ENCODE measurements at regions of chr6 and their contacts with region 1.

Region 1: DNA sequence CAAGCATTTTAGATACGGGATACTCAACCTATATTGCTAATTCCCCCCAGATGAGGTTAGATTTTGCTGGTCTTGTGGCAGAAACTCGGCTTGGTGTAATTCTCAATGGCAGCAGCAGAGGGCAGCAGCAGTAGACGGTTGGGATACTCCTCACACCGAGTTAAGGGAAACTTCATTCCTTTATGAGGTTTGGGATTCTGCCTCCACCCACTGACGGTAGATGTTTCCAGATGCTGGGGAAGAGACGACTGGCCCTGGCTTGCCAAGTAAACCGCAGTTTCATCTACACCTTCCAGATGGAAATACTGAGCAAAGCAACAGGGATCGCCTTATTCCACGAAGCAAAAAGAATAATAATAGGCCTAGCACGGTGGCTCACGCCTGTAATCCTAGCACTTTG is 8.2 kb upstream of the TBC1D7 start:
- DNase-seq: peak; percentile 79
- H3K4me3 ChIP-seq: no peak overlapping the region
- H3K27ac ChIP-seq: no peak overlapping the region
- H3K4me1 ChIP-seq: peaks cover 0 to 5% (median 1%) of the 10 kb centered on the region in 4 donors
- H3K27me3 ChIP-seq: no peaks in the 10 kb centered on the region
- CTCF ChIP-seq: peak; percentile 91 to 97 (median 91)
- EP300 ChIP-seq: no peak
- POLR2A ChIP-seq: no peak

Region 2: DNA sequence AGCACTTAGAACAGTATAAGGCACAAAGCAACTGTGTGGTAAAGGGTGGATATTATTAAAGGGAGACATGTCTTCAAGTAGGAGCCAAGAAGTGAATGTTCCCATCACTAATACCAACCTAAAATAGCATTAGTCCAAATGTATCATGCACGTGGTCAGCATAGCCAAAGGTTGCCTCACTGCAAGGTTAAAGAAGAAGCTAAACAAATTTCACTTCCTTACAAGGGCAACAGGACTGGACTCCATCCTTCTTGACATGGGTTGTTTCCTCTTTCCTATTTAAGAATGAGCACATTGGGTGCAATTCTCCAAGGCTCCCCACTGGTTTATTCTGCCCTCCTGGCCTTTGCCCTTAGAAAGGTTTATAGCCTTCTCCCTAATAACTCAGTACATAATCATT is 433.3 kb before region 1 on chr6:
- in situ Hi-C with region 1: loop called in 3 of 4 experiments (anchors 10 to 25 kb)
- intact Hi-C with region 1: no loop called
- DNase-seq: no peak
- H3K4me3 ChIP-seq: no peak overlapping the region
- H3K27ac ChIP-seq: no peak overlapping the region
- H3K4me1 ChIP-seq: no peaks in the 10 kb centered on the region
- H3K27me3 ChIP-seq: no peaks in the 10 kb centered on the region
- CTCF ChIP-seq: no peak
- EP300 ChIP-seq: no peak
- POLR2A ChIP-seq: no peak

Region 3: DNA sequence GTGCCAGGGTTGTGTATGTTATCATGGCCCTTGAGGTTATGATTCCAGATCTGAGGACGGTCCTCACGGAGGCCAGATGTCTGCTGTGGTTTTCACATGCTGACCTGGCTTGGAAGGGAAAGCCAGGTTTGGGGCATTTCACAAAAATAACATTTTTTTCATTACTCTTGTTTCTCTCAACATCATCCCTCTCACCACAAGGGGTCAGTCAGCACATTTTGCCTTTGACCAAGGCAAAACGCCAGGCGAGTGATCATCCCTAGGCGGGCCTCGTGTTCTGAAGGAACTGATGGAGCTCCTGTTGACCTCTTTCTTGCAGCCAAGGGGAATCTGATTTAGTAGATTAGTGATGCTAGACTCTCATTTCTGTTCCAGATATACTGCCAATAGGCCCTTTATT is 141.7 kb before region 1 on chr6:
- in situ Hi-C with region 1: loop called in 1 of 4 experiments (anchors 10 kb)
- intact Hi-C with region 1: no loop called
- DNase-seq: peak; percentile 48
- H3K4me3 ChIP-seq: no peak overlapping the region
- H3K27ac ChIP-seq: no peak overlapping the region
- H3K4me1 ChIP-seq: no peaks in the 10 kb centered on the region
- H3K27me3 ChIP-seq: no peaks in the 10 kb centered on the region
- CTCF ChIP-seq: peak; percentile 30 to 45 (median 39)
- EP300 ChIP-seq: no peak
- POLR2A ChIP-seq: no peak

Region 4: GRCh38 chr6:13362421-13362820 is 25.9 kb after region 1 on chr6:
- in situ Hi-C with region 1: no loop called
- intact Hi-C with region 1: no loop called
- DNase-seq: no peak
- H3K4me3 ChIP-seq: no peak overlapping the region
- H3K27ac ChIP-seq: no peak overlapping the region
- H3K4me1 ChIP-seq: peaks cover 0 to 6% (median 0%) of the 10 kb centered on the region in 4 donors
- H3K27me3 ChIP-seq: no peaks in the 10 kb centered on the region
- CTCF ChIP-seq: no peak
- EP300 ChIP-seq: no peak
- POLR2A ChIP-seq: no peak

Region 5: DNA sequence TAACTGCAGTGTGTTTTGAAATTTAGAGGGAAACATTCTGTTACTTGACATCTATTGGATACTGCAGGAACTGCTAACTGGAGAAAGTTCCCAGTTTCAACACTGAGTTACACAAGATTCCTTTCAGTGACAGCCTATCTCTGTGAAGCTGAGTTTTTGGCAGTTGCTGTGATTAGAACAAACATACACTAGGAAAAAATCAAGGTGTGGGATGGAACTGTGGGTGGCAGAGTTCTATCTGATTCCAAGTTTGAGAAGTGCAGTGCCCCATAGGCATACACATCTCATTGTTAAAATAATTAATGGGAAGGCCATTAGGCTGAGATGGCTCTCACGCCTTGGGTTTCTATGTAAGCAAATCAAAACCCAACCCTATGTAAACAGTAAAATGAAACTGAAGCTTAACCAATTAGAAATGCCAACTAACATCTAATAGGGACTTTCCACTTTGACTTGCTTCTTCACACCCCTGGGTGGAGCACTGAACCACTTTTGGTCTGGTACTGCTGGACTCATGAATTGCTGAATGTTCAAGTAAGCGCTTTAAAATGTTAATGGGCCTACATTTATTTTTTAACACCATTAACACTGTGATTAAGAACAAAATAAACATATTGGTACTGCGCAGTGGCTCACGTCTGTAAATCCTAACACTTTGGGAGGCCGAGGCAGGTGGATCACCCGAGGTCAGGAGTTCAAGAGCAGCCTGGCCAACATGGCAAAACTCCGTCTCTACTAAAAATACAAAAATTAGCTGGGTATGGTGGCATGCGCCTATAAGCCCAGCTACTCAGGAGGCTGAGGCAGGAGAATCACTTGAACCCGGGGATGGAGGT is 47.0 kb after region 1 on chr6:
- in situ Hi-C with region 1: no loop called
- intact Hi-C with region 1: no loop called
- DNase-seq: no peak
- H3K4me3 ChIP-seq: no peak overlapping the region
- H3K27ac ChIP-seq: peak overlapping the region; percentile 20 to 50 (median 36)
- H3K4me1 ChIP-seq: peaks cover 17 to 55% (median 42%) of the 10 kb centered on the region in 4 donors
- H3K27me3 ChIP-seq: no peaks in the 10 kb centered on the region
- CTCF ChIP-seq: peak in 3 of 5 experiments; percentile 8 to 30 (median 10)
- EP300 ChIP-seq: no peak
- POLR2A ChIP-seq: no peak

Region 6: GRCh38 chr6:13538084-13538483 is 201.5 kb after region 1 on chr6:
- in situ Hi-C with region 1: loop called (anchors 10 to 25 kb)
- intact Hi-C with region 1: loop called (anchors 10 kb)
- DNase-seq: no peak
- H3K4me3 ChIP-seq: no peak overlapping the region
- H3K27ac ChIP-seq: no peak overlapping the region
- H3K4me1 ChIP-seq: peaks cover 0 to 17% (median 10%) of the 10 kb centered on the region in 4 donors
- H3K27me3 ChIP-seq: no peaks in the 10 kb centered on the region
- CTCF ChIP-seq: peak; percentile 34 to 55 (median 41)
- EP300 ChIP-seq: no peak
- POLR2A ChIP-seq: no peak

Region 7: GRCh38 chr6:13561624-13562267 is 225.2 kb after region 1 on chr6:
- in situ Hi-C with region 1: no loop called
- intact Hi-C with region 1: loop called (anchors 10 kb)
- DNase-seq: no peak
- H3K4me3 ChIP-seq: no peak overlapping the region
- H3K27ac ChIP-seq: peak overlapping the region in 2 of 4 donors; percentile 17 to 46
- H3K4me1 ChIP-seq: no peaks in the 10 kb centered on the region
- H3K27me3 ChIP-seq: no peaks in the 10 kb centered on the region
- CTCF ChIP-seq: no peak
- EP300 ChIP-seq: no peak
- POLR2A ChIP-seq: no peak

Measured in transverse colon (tissue), 4 donors.